A673 (cell line): ENCODE measurements at regions of chr13 and their contacts with region 1.

Region 1: DNA sequence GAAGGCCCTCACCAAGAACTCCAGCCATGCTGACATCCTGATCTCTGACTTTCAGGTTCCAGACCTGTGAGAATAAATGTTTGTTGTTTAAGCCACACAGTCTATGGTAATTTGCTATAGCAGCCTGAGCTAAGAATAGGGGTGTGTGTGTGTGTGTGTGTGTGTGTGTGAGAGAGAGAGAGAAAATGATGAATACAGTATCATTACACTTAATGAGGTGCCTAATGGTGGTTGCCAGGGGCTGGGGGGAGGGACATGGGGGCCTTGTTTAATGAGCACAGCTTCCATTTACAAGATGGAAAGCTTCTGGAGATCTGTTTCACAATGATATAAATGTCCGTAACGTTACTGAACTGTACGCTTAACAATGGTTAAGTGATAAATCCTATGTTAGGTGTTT is 53.8 kb upstream of the LATS2 start:
- DNase-seq: no peak
- H3K4me3 ChIP-seq: no peak overlapping the region
- H3K27ac ChIP-seq: no peak overlapping the region
- H3K4me1 ChIP-seq: peaks cover 4% of the 10 kb centered on the region
- H3K27me3 ChIP-seq: no peaks in the 10 kb centered on the region
- CTCF ChIP-seq: no peak

Region 2: GRCh38 chr13:21060987-21061763 is 54.1 kb before region 1 on chr13 and contains the start of gene LATS2:
- CTCF ChIA-PET with region 1: no interaction called
- POLR2A ChIA-PET with region 1: no interaction called
- intact Hi-C with region 1: no loop called
- DNase-seq: peak; percentile 88
- H3K4me3 ChIP-seq: peak within 1 kb of the TSS; percentile 99
- H3K27ac ChIP-seq: peak within 1 kb of the TSS; percentile 93
- H3K4me1 ChIP-seq: peaks cover 22% of the 10 kb centered on the region
- H3K27me3 ChIP-seq: no peaks in the 10 kb centered on the region
- CTCF ChIP-seq: no peak
- total RNA-seq, gene LATS2: 13.1 and 14.2 TPM in 2 replicates

Region 3: GRCh38 chr13:21181671-21182070 is 66.4 kb after region 1 on chr13:
- CTCF ChIA-PET with region 1: no interaction called
- POLR2A ChIA-PET with region 1: no interaction called
- intact Hi-C with region 1: loop called (anchors 5 kb)
- DNase-seq: no peak
- H3K4me3 ChIP-seq: no peak overlapping the region
- H3K27ac ChIP-seq: no peak overlapping the region
- H3K4me1 ChIP-seq: peaks cover 24% of the 10 kb centered on the region
- H3K27me3 ChIP-seq: no peaks in the 10 kb centered on the region
- CTCF ChIP-seq: no peak

Region 4: DNA sequence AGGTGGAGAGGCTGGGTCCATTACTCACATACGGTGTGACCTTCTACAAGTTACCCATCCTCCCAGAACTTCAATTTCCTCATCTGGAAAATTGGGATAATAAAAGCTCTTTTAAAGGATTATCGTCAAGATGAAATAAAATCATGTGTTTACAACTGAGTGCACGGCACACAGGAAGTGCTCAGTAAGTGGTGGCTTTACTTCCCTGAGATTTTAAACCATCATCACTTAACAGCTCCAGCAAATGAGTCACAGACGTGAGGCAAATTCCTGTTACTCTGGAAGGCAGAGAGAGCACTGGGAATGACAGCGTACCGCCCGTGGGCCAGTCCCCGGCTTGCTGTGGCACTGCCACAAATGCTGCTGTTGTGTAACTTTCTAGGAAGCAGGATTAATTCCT is 125.4 kb after region 1 on chr13:
- CTCF ChIA-PET with region 1: no interaction called
- POLR2A ChIA-PET with region 1: interaction called, 13 read pairs
- intact Hi-C with region 1: no loop called
- DNase-seq: peak; percentile 96
- H3K4me3 ChIP-seq: no peak overlapping the region
- H3K27ac ChIP-seq: peak overlapping the region; percentile 84
- H3K4me1 ChIP-seq: peaks cover 34% of the 10 kb centered on the region
- H3K27me3 ChIP-seq: no peaks in the 10 kb centered on the region
- CTCF ChIP-seq: no peak